ENCODE measurements at regions of chr10 and their contacts with region 1.

Region 1: DNA sequence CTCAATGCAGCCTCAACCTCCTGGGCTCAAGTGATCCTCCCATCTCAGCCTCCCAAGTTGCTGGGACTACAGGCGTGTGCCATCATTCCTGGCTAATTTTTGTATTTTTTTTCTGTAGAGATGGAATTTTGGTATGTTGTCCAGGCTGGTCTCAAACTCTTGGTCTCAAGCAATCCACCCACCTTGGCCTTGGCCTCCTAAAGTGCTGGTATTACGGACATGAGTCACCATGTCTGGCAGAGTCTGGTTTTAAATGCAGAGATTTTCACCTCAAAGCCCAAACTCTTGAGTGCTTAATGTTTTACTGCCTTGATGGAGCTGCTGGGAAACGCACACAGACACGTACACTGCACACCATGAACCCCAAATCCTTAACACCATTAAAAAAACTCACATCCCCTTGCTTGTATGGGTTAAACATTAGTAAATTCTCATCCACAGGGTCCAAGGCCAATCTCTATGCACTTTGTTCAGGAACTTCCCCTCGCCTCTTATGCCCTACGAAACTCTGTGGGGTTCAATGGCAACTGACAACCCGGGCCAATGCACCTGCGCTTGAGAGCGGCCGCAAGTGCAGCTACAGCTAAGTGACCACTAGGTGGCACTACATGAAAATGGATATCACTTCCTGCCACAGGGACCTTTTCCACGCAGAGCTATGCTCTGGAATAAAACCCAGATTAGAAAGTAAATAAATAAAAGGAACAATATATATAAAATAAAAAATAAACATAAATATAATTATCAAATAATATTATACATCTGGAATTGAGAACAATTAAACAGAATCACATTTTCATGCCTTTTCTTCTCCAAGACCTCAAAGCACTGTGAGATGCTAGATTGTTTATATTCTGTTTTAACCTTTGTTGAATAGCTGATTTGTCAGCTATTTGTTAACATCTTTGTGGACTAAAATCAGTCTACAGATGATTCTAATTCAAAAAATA is 66.9 kb upstream of the AFAP1L2 start:
- DNase-seq: peak; percentile 79
- ATAC-seq: peak; percentile 87
- H3K4me3 Mint-ChIP-seq: no peak overlapping the region
- H3K27ac Mint-ChIP-seq: peak overlapping the region; percentile 27
- H3K4me1 Mint-ChIP-seq: peaks cover 21% of the 10 kb centered on the region
- H3K27me3 Mint-ChIP-seq: no peaks in the 10 kb centered on the region

Region 2: GRCh38 chr10:114304017-114304570 is 167.1 kb before region 1 on chr10:
- CTCF ChIA-PET with region 1: interaction called, 12 read pairs
- POLR2A ChIA-PET with region 1: no interaction called
- intact Hi-C with region 1: loop called in 1 of 2 experiments (anchors 5 kb)
- DNase-seq: peak; percentile 86
- ATAC-seq: peak; percentile 76
- H3K4me3 Mint-ChIP-seq: peak overlapping the region; percentile 69
- H3K27ac Mint-ChIP-seq: peak overlapping the region; percentile 59
- H3K4me1 Mint-ChIP-seq: peaks cover 8% of the 10 kb centered on the region
- H3K27me3 Mint-ChIP-seq: no peaks in the 10 kb centered on the region

Region 3: GRCh38 chr10:114499630-114500190 is 28.5 kb after region 1 on chr10:
- CTCF ChIA-PET with region 1: interaction called, 15 read pairs
- POLR2A ChIA-PET with region 1: interaction called, 3 read pairs
- intact Hi-C with region 1: no loop called
- DNase-seq: peak; percentile 89
- ATAC-seq: peak; percentile 54
- H3K4me3 Mint-ChIP-seq: peak overlapping the region; percentile 61
- H3K27ac Mint-ChIP-seq: peak overlapping the region; percentile 99
- H3K4me1 Mint-ChIP-seq: peaks cover 92% of the 10 kb centered on the region
- H3K27me3 Mint-ChIP-seq: no peaks in the 10 kb centered on the region

Region 4: DNA sequence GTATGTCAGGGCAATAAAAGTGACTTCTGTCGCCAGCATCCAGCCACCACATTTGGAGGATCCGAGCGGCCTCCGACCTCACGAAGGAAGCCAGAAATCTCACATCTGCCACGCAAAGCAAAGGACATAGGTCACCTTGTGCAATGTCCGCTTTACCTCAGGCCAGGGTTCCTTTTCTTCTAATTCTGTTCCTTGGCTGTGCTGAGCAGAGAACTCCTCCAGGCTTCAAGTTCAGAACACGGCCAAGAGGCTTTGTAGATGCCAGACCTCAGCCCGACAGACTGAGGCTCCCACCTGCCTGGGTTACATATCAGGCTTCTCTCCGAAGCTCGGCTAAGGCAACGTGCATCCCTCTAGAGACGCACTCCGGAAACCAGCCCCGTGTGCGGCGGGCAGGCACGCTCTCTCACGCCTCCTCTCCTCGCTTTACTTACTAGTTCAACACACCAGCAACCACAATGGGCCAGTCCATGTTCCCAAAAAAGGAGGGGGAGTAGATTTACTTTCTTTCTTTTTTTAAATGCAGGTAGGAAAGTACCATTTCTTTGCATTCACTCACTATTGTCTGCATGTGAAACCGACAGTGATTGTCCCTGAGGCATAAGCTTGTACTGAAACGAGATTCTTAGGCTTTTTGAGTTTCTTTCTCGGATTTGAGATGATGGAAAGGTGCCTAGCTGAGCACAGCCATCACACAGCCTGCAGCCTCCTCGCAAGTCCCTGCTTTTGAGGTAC is 55.4 kb after region 1 on chr10:
- CTCF ChIA-PET with region 1: interaction called, 30 read pairs
- POLR2A ChIA-PET with region 1: interaction called, 6 read pairs
- intact Hi-C with region 1: loop called in 1 of 2 experiments (anchors 1 kb)
- DNase-seq: peak; percentile 95
- ATAC-seq: peak; percentile 93
- H3K4me3 Mint-ChIP-seq: peak overlapping the region; percentile 88
- H3K27ac Mint-ChIP-seq: peak overlapping the region; percentile 95
- H3K4me1 Mint-ChIP-seq: peaks cover 54% of the 10 kb centered on the region
- H3K27me3 Mint-ChIP-seq: no peaks in the 10 kb centered on the region

Region 5: DNA sequence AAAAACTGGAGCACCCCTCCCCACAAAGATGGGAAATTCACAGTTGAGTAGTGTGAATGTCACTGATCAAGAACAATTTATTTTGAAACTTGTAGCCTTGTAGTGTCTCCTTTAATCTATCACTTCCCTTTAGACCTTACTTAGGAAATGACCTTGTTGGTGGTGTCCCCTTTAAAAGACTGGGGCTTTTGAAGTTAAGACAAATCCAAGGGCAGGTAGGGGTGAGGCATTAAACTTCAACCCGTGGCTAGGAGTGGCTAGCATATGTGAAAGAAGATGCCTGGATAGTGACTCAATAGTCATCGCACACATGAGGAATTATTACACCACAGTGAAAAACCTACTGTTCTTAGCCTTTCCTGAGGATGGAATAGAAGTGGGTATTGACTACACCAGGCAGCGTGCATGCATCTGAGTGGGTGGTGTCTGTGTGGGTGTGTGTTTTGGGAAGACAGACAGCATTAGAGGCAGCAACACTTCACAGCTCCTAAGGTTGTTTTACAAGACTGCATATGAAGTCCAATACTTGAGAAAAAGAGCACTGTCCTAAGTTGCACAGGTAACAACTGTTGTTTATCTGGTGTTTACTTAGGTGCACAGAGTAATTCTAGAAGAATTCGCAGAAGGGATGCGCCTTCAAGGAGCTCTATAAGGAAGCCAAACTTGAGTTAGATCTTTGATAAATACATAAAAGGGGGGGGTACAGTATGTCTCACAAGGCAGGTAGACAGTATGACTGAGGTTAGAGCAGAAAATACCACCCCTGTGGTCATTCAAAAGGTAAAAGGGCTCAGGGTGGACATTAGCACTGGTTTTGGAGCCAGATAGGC is 153.9 kb after region 1 on chr10:
- CTCF ChIA-PET with region 1: interaction called, 3 read pairs
- POLR2A ChIA-PET with region 1: no interaction called
- intact Hi-C with region 1: loop called in 1 of 2 experiments (anchors 5 kb)
- DNase-seq: no peak
- ATAC-seq: peak; percentile 39
- H3K4me3 Mint-ChIP-seq: no peak overlapping the region
- H3K27ac Mint-ChIP-seq: no peak overlapping the region
- H3K4me1 Mint-ChIP-seq: peaks cover 3% of the 10 kb centered on the region
- H3K27me3 Mint-ChIP-seq: peaks cover 7% of the 10 kb centered on the region

Region 6: DNA sequence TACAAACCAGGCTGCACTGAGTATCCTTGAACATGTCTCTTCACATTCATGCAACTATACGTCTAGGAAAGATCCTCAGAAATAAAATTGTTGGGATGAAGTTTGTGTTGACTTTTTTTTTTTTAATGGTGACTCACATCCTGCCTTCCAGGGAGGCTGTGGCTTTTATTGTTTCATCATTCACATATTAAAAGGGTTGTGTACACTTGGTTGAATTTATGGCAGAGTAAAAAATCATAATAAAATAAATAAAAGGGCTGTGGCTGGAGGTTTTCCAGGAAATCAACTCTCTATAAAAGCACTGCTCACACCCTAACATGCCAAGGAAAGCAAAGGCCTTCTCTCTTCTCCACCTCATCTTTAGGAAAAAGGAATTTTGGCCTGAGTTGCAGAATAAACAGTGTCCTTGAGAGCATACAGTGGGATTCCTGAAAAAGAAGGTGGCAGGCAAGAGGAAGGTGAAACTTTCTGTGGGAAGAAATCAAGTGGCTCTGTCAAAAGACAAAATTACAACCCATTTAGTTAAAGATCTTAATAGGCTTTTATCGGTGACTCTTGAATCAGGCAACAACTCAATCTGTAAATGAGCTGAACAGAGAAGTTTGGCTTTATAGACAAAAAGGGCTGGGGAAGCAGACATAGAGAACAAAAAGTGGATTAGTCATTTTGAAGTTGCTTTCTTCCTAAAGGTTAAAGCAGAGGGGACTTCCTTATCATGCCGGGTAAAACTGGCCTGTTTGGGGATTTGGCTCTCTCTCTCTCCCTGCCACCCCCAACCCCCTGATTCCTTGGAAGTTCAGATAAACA is 308.8 kb after region 1 on chr10:
- CTCF ChIA-PET with region 1: no interaction called
- POLR2A ChIA-PET with region 1: no interaction called
- intact Hi-C with region 1: loop called in 1 of 2 experiments (anchors 1 kb)
- DNase-seq: no peak
- ATAC-seq: peak; percentile 57
- H3K4me3 Mint-ChIP-seq: no peak overlapping the region
- H3K27ac Mint-ChIP-seq: peak overlapping the region; percentile 59
- H3K4me1 Mint-ChIP-seq: peaks cover 5% of the 10 kb centered on the region
- H3K27me3 Mint-ChIP-seq: peaks cover 3% of the 10 kb centered on the region